A673 (cell line): ENCODE measurements at regions of chr2 and their contacts with region 1.

Region 1: GRCh38 chr2:185689906-185690539 is 48.6 kb upstream of the FSIP2 start:
- DNase-seq: no peak
- H3K4me3 ChIP-seq: no peak overlapping the region
- H3K27ac ChIP-seq: no peak overlapping the region
- H3K4me1 ChIP-seq: no peaks in the 10 kb centered on the region
- H3K27me3 ChIP-seq: no peaks in the 10 kb centered on the region
- CTCF ChIP-seq: no peak

Region 2: GRCh38 chr2:185255566-185255965 is 434.5 kb before region 1 on chr2:
- CTCF ChIA-PET with region 1: interaction called, 13 read pairs
- POLR2A ChIA-PET with region 1: no interaction called
- intact Hi-C with region 1: no loop called
- DNase-seq: no peak
- H3K4me3 ChIP-seq: no peak overlapping the region
- H3K27ac ChIP-seq: no peak overlapping the region
- H3K4me1 ChIP-seq: no peaks in the 10 kb centered on the region
- H3K27me3 ChIP-seq: no peaks in the 10 kb centered on the region
- CTCF ChIP-seq: no peak

Region 3: GRCh38 chr2:185875136-185875931 is 185.3 kb after region 1 on chr2:
- CTCF ChIA-PET with region 1: no interaction called
- POLR2A ChIA-PET with region 1: no interaction called
- intact Hi-C with region 1: no loop called
- DNase-seq: no peak
- H3K4me3 ChIP-seq: no peak overlapping the region
- H3K27ac ChIP-seq: no peak overlapping the region
- H3K4me1 ChIP-seq: no peaks in the 10 kb centered on the region
- H3K27me3 ChIP-seq: no peaks in the 10 kb centered on the region
- CTCF ChIP-seq: no peak